Psoas muscle (tissue), 8 donors: ENCODE measurements at regions of chr16 and their contacts with region 1.

Region 1: DNA sequence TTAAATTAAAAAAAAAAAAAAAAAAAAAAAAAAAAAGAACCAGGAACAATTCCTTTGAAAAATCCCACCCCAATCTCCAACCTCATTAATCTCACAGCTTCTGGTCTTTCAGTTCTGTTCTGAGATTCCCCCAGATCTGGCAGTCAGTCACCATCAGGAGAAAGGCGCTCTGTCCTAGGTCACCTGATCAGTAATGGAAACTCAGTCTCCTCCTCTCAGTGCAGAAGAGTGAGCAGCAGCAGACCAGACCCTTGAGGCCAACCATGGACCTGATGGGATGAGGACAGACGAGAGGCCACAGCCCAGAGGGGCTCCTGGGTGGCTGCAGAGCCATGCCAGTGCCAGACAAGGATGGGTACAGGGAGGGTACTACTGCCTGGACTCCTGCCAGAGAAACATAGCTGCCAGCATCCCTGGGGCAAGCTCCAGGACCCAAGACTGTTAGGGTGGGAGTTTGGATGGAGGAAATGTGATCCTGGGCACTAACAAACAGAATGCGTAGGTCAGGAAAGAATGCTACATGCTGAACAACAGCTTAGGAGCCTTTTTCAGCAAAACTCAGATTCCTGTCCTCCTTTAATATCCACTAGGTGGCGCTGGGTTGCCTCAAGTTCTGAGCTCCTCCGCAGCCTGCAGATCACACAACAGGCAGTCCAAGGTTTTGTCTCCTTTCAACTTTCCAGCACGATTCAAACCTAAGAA is 28.7 kb downstream of the MPG start:
- DNase-seq: no peak
- ATAC-seq: peak in 2 of 4 donors; percentile 26 to 39
- H3K4me3 ChIP-seq: no peak overlapping the region
- H3K27ac ChIP-seq: no peak overlapping the region
- H3K4me1 ChIP-seq: peaks cover 21% of the 10 kb centered on the region
- H3K27me3 ChIP-seq: no peaks in the 10 kb centered on the region
- CTCF ChIP-seq: peak; percentile 82

Region 2: GRCh38 chr16:180938-181667 is 74.3 kb after region 1 on chr16:
- intact Hi-C with region 1: loop called (anchors 1 to 2 kb)
- DNase-seq: peak; percentile 70 to 85
- ATAC-seq: peak; percentile 79 to 85 (median 84)
- H3K4me3 ChIP-seq: peak overlapping the region; percentile 49
- H3K27ac ChIP-seq: no peak overlapping the region
- H3K4me1 ChIP-seq: peaks cover 11% of the 10 kb centered on the region
- H3K27me3 ChIP-seq: peaks cover 0 to 48% (median 18%) of the 10 kb centered on the region in 3 donors
- CTCF ChIP-seq: peak; percentile 93

Region 3: DNA sequence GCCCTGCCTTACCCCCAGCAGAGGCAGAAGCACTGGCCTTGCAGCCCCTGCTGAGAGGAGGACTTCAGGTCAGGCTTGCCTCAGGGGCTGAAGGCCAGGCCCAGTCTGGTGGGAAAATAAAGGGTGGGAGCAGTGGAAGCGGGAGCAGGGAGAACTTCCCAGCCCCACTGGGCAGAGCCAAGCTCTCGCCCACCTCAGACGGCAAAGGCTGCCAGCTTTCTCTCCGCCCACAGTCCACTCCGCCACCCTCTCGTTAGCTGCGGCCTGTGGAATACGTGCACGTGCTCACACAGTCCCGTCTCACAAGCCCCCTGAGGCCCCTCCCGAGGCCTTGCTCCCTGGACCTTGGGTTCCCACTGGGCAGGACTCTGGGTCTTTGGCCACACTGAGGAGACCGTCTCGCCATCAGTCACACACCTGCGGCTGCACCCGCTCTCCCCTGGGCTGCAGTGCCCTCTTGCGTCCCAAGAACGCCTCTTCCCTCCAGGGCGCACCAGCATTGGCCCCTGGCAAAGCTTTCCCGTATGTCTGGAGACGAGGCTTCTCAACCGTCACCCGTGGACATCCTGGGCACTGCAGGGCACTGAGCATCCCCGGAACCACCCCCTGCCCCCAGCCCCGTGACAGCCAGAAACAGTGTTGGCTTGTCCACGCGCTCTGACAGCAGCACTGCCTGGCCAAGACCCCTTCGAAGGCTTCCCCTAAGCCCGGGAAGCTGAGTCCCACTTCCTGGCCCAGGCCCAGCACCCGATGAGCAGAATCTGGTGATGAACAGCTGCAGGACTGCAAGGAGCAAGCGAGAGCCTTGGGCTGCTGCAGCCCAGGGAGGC is 255.3 kb after region 1 on chr16:
- intact Hi-C with region 1: loop called (anchors 2 to 5 kb)
- DNase-seq: peak; percentile 70 to 83
- ATAC-seq: peak; percentile 88 to 93 (median 90)
- H3K4me3 ChIP-seq: no peak overlapping the region
- H3K27ac ChIP-seq: no peak overlapping the region
- H3K4me1 ChIP-seq: no peaks in the 10 kb centered on the region
- H3K27me3 ChIP-seq: peaks cover 0 to 15% (median 2%) of the 10 kb centered on the region in 3 donors
- CTCF ChIP-seq: peak; percentile 80